ENCODE measurements at regions of chr7 and their contacts with region 1.

Region 1: GRCh38 chr7:131040467-131040932 is 287.2 kb upstream of the MKLN1 start:
- DNase-seq: peak; percentile 58 to 79
- ATAC-seq: peak; percentile 82 to 83
- H3K4me3 ChIP-seq: no peak overlapping the region
- H3K27ac ChIP-seq: peak overlapping the region; percentile 15 to 47; a peak in 1 of 6 replicates
- H3K4me1 ChIP-seq: peaks cover 38% of the 10 kb centered on the region
- CTCF ChIP-seq: peak; percentile 92
- EP300 ChIP-seq: no peak
- POLR2A ChIP-seq: no peak
- RAD21 ChIP-seq: peak; percentile 89 to 91

Region 2: DNA sequence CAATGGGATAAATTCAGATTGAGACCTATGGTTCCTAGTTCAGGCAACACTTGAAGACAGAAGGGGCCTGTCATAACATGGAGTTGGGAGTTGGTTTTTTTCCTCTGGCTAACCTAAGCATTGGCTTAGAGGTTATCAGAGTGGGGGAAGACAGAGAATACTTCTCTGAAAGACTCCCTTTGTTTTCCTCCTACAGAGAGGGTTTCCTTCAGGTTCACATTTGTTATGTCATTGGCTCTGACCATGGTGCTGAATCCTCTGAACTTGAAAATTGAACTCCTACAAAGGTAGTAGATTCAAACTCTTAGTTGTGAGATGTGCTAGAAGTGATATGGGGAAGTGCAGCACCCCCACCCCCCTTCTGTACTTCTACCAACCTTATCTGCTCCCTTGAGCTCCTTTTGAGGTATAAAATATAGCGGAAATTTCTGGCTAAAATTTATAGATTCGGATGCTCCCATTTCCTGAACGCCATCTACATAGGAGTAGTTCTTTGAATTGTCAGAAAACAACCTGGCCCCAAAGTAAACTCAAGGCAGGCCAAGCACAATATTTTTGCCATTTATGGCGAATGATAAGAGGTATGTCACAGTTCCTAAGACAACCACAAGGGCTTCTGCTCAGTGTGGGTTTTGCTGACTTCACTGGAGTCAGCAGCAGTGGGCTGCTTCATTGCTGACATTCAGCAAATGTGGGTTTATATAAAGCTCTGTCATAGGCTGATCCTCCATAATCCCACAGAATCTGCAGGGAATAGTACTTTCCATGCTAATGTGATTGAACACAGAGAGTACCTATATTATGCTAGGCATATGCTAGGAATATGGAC is 174.9 kb before region 1 on chr7:
- CTCF ChIA-PET with region 1: no interaction called
- POLR2A ChIA-PET with region 1: no interaction called
- DNase-seq: no peak
- ATAC-seq: peak; percentile 41 to 57
- H3K4me3 ChIP-seq: no peak overlapping the region
- H3K27ac ChIP-seq: no peak overlapping the region
- H3K4me1 ChIP-seq: peaks cover 2% of the 10 kb centered on the region; the same call in 2 of the 3 replicates
- CTCF ChIP-seq: no peak
- EP300 ChIP-seq: no peak
- POLR2A ChIP-seq: no peak
- RAD21 ChIP-seq: no peak

Region 3: GRCh38 chr7:130929896-130930659 is 110.4 kb before region 1 on chr7:
- CTCF ChIA-PET with region 1: interaction called, 11 read pairs
- POLR2A ChIA-PET with region 1: no interaction called
- DNase-seq: peak in 1 of 2 experiments; percentile 77
- ATAC-seq: peak; percentile 50 to 56
- H3K4me3 ChIP-seq: no peak overlapping the region
- H3K27ac ChIP-seq: peak overlapping the region; percentile 75 to 85
- H3K4me1 ChIP-seq: peaks cover 84% of the 10 kb centered on the region
- CTCF ChIP-seq: no peak
- EP300 ChIP-seq: peak in 1 of 2 experiments; percentile 20; a peak in 1 of 5 replicates
- POLR2A ChIP-seq: no peak
- RAD21 ChIP-seq: no peak

Region 4: DNA sequence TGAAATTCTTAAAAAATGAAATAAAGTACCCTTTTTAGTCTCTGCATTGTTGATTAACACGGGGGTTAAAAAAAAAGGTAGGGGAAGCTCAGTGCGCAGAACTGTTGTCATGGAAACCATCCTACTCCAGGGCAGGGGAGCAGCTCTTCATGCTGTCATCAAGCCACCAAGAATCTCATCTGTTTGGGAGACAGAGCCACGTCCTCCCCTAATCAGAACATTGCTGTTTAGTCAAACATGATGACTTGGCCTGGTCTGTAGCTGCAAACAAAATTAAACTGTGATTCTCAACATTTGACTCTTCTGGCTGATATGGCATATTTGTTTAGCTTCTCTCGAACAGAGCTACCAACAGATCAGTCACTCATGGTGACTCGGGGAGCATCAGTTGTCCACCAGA is 52.1 kb before region 1 on chr7:
- CTCF ChIA-PET with region 1: interaction called, 17 read pairs
- POLR2A ChIA-PET with region 1: no interaction called
- DNase-seq: no peak
- ATAC-seq: no peak
- H3K4me3 ChIP-seq: no peak overlapping the region
- H3K27ac ChIP-seq: no peak overlapping the region; a peak in 1 of 6 replicates
- H3K4me1 ChIP-seq: peaks cover 67% of the 10 kb centered on the region
- CTCF ChIP-seq: no peak
- EP300 ChIP-seq: no peak
- POLR2A ChIP-seq: no peak
- RAD21 ChIP-seq: no peak

Region 5: GRCh38 chr7:131007394-131008330 is 32.8 kb before region 1 on chr7:
- CTCF ChIA-PET with region 1: interaction called, 16 read pairs
- POLR2A ChIA-PET with region 1: no interaction called
- DNase-seq: peak; percentile 79 to 93
- ATAC-seq: peak; percentile 86
- H3K4me3 ChIP-seq: no peak overlapping the region
- H3K27ac ChIP-seq: peak overlapping the region; percentile 87 to 91
- H3K4me1 ChIP-seq: peaks cover 65% of the 10 kb centered on the region
- CTCF ChIP-seq: peak; percentile 68
- EP300 ChIP-seq: no peak
- POLR2A ChIP-seq: no peak
- RAD21 ChIP-seq: peak; percentile 76 to 82